Mammary epithelial cell (primary cell): ENCODE measurements at regions of chr17 and their contacts with region 1.

Region 1: GRCh38 chr17:39794249-39794970 is 56.7 kb downstream of the GRB7 start:
- DNase-seq: no peak
- H3K4me3 ChIP-seq: no peak overlapping the region
- H3K27ac ChIP-seq: no peak overlapping the region
- H3K4me1 ChIP-seq: no peaks in the 10 kb centered on the region
- H3K27me3 ChIP-seq: peaks cover 17% of the 10 kb centered on the region
- CTCF ChIP-seq: no peak

Region 2: GRCh38 chr17:39813631-39814030 is 19.2 kb after region 1 on chr17:
- CTCF ChIA-PET with region 1: no interaction called
- dilution Hi-C with region 1: no loop called
- in situ Hi-C with region 1: no loop called
- intact Hi-C with region 1: no loop called
- DNase-seq: no peak
- H3K4me3 ChIP-seq: no peak overlapping the region
- H3K27ac ChIP-seq: no peak overlapping the region
- H3K4me1 ChIP-seq: peaks cover 2% of the 10 kb centered on the region
- H3K27me3 ChIP-seq: no peaks in the 10 kb centered on the region
- CTCF ChIP-seq: no peak

Region 3: GRCh38 chr17:39943702-39944392 is 149.4 kb after region 1 on chr17:
- CTCF ChIA-PET with region 1: interaction called, 26 read pairs
- dilution Hi-C with region 1: no loop called
- in situ Hi-C with region 1: no loop called
- intact Hi-C with region 1: no loop called
- DNase-seq: no peak
- H3K4me3 ChIP-seq: no peak overlapping the region
- H3K27ac ChIP-seq: no peak overlapping the region
- H3K4me1 ChIP-seq: peaks cover 9% of the 10 kb centered on the region
- H3K27me3 ChIP-seq: no peaks in the 10 kb centered on the region
- CTCF ChIP-seq: no peak